Heart left ventricle (tissue), 16 donors: ENCODE measurements at regions of chr15 and their contacts with region 1.

Region 1: DNA sequence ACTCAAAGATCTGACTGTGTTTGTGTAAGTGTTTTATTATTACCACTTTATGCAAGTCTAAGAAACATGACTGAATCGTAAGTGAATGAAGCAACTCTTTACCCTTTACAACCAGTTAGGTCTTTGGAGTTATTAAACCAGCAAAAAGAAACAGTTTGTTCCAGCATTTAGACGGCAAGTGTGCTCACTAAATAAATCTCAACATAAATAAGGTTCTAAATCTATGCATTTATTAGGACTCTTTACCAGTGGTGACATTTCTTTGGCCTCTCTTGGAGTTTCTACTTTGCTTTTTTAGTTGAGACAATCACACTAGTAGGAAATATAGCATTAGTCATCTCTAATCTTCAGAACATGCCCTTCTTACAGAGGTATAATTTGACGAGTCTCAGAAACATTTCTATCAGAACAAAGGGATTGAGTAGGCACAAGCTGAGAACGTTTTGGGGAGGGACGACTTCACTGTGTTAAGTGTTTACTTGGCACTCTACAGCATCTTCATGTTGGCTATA is 739.9 kb upstream of the NR2F2 start:
- DNase-seq: no peak
- ATAC-seq: no peak
- H3K4me3 ChIP-seq: no peak overlapping the region
- H3K27ac ChIP-seq: no peak overlapping the region
- H3K4me1 ChIP-seq: no peaks in the 10 kb centered on the region
- H3K27me3 ChIP-seq: no peaks in the 10 kb centered on the region
- CTCF ChIP-seq: no peak
- POLR2A ChIP-seq: no peak

Region 2: GRCh38 chr15:95291898-95292472 is 298.6 kb before region 1 on chr15:
- intact Hi-C with region 1: loop called in 1 of 10 experiments (anchors 10 kb)
- DNase-seq: no peak
- ATAC-seq: no peak
- H3K4me3 ChIP-seq: no peak overlapping the region
- H3K27ac ChIP-seq: no peak overlapping the region
- H3K4me1 ChIP-seq: peaks cover 0 to 33% (median 5%) of the 10 kb centered on the region in 12 donors
- H3K27me3 ChIP-seq: no peaks in the 10 kb centered on the region
- CTCF ChIP-seq: peak; percentile 47 to 78 (median 66)
- POLR2A ChIP-seq: no peak

Region 3: DNA sequence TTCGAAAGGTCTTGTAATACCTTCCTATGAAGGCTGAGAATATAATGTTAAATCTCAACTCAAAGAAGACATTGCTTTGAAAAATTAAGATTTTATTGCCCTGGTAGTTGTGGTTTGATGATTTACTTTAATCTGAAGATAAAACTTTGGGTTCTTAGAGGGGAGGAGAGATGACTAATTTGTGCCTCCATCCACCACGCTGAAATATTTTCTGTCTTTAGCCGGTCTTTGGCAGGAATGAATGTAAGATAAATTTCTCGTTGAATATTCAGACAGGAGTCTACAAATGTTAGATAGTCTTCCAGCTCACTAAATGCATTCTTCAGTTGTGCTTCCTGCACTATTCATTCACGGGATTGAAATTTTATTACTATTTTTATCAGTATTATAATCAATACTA is 104.4 kb before region 1 on chr15:
- intact Hi-C with region 1: loop called in 1 of 10 experiments (anchors 10 kb)
- DNase-seq: no peak
- ATAC-seq: no peak
- H3K4me3 ChIP-seq: no peak overlapping the region
- H3K27ac ChIP-seq: no peak overlapping the region
- H3K4me1 ChIP-seq: no peaks in the 10 kb centered on the region
- H3K27me3 ChIP-seq: no peaks in the 10 kb centered on the region
- CTCF ChIP-seq: no peak
- POLR2A ChIP-seq: no peak

Region 4: GRCh38 chr15:95541301-95541700 is 49.3 kb before region 1 on chr15:
- intact Hi-C with region 1: no loop called
- DNase-seq: no peak
- ATAC-seq: no peak
- H3K4me3 ChIP-seq: no peak overlapping the region
- H3K27ac ChIP-seq: no peak overlapping the region
- H3K4me1 ChIP-seq: no peaks in the 10 kb centered on the region
- H3K27me3 ChIP-seq: no peaks in the 10 kb centered on the region
- CTCF ChIP-seq: no peak
- POLR2A ChIP-seq: no peak